ENCODE measurements at regions of chr5 and their contacts with region 1.

Region 1: DNA sequence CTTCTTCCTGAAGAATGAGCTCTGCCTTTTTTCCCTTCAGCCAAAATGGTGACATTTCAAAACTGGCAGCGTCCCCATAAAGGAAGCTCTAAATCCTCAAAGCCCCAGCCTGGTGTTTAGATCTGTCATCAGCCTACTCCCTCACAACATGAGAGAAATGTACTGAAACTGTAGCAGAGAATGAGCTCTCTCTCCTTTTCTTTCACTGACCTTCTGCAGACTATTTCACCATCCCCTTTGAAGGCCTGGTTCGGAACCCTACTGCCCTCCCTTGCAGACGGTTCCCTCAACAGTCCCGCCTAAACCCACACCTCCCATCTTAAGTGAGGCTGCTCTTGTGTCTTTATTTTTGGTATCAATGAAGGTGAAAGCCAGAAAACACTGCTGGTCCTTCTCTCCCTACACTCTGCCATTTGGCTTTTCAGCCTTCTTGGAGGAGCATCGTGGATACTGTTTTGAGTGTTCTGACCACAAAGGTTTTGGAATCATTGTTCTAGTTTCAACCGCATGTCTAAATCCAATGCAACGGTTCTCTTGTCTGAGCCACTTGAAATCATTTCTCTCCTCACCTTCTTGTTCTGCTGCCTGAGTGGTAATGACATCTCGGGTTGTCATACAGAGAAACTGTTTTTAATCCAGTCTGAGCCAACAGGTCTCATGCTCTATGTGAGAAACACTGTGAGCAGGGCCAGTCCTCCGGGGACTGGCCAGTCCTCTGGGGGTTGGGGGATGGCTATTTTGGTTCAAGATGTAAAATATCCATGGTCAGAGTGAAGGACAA is 39.0 kb downstream of the ITK start:
- DNase-seq: peak; percentile 62
- ATAC-seq: peak; percentile 63
- H3K4me3 Mint-ChIP-seq: peak overlapping the region; percentile 33
- H3K27ac Mint-ChIP-seq: peak overlapping the region; percentile 93
- H3K4me1 Mint-ChIP-seq: peaks cover 90% of the 10 kb centered on the region
- H3K27me3 Mint-ChIP-seq: no peaks in the 10 kb centered on the region

Region 2: GRCh38 chr5:157026789-157027424 is 192.8 kb before region 1 on chr5:
- CTCF ChIA-PET with region 1: interaction called, 3 read pairs
- POLR2A ChIA-PET with region 1: no interaction called
- intact Hi-C with region 1: loop called in 1 of 2 experiments (anchors 10 kb)
- DNase-seq: peak; percentile 32
- ATAC-seq: no peak
- H3K4me3 Mint-ChIP-seq: no peak overlapping the region
- H3K27ac Mint-ChIP-seq: no peak overlapping the region
- H3K4me1 Mint-ChIP-seq: peaks cover 36% of the 10 kb centered on the region
- H3K27me3 Mint-ChIP-seq: no peaks in the 10 kb centered on the region

Region 3: DNA sequence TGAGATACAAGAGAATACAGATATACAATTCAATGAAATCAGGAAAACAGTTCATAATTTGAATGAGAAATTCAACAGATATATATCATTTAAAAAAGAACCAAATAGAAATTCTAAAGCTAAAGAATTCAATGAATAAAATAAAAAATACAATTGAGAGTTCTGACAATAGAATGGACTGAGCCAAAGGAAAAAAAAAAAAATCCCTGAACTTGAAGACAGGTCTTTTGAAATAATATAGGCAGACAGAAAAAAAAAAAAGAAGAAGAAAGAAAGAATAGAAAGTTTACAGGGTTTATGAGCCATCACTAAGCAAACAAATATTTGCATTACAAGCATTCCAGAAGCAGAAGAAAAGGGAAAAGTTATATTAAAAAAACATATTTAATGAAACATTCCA is 98.0 kb before region 1 on chr5:
- CTCF ChIA-PET with region 1: no interaction called
- POLR2A ChIA-PET with region 1: no interaction called
- intact Hi-C with region 1: no loop called
- DNase-seq: no peak
- ATAC-seq: no peak
- H3K4me3 Mint-ChIP-seq: no peak overlapping the region
- H3K27ac Mint-ChIP-seq: no peak overlapping the region
- H3K4me1 Mint-ChIP-seq: peaks cover 4% of the 10 kb centered on the region
- H3K27me3 Mint-ChIP-seq: no peaks in the 10 kb centered on the region

Region 4: DNA sequence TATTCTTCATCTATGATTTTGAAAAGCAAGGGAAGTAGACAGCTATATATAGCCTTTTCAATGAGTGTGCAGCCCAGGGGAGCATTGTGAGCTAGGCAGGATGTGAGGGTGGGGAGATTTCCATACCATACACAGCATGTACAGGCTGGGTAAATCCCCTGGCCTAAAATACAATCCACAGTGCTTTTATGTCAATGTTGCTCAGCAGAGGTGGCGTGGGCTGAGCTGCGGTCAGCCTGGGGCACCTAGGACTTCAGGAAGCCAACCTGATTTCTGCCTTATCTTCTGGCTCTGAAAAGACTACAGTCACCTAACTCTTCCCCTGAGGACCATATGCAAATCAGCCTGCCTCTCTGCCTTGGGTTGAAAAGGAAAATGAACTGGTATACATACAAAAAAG is 47.3 kb before region 1 on chr5:
- CTCF ChIA-PET with region 1: interaction called, 5 read pairs
- POLR2A ChIA-PET with region 1: interaction called, 10 read pairs
- intact Hi-C with region 1: loop called in 1 of 2 experiments (anchors 1 kb)
- DNase-seq: peak; percentile 96
- ATAC-seq: peak; percentile 93
- H3K4me3 Mint-ChIP-seq: peak overlapping the region; percentile 63
- H3K27ac Mint-ChIP-seq: peak overlapping the region; percentile 94
- H3K4me1 Mint-ChIP-seq: peaks cover 85% of the 10 kb centered on the region
- H3K27me3 Mint-ChIP-seq: no peaks in the 10 kb centered on the region

Region 5: DNA sequence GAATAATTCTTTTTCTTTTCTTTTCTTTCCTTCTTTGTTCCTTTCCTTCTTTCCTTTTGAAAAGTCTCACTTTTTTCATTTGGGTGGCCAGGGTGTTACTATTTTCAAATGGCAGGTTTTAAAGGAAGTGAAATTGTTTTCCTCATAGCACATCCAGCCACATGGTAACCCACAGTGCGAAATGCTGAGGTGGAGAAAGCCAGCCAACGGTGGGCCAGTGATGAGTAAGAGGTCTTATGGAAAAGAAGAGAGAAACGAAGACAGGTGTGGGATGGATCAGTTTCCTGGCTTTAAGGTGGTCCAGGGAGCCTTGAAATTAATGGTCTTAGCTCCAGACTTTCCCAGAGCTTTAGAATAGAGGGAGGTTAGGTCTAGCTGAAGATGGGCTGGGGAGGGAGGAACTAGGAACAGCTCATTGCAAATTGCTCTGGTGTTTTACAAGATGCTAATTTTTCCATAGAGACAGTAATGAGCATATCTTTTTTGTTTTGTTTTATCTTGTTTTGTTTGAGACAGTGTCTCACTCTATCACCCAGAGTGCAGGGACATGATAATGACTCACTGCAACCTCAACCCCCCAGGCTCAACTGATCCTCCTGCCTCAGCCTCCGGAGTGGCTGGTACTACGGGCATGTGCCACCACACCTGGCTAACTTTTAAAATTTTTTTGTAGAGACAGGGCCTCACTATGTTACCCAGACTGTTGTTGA is 21.2 kb before region 1 on chr5:
- CTCF ChIA-PET with region 1: interaction called, 8 read pairs
- POLR2A ChIA-PET with region 1: interaction called, 6 read pairs
- intact Hi-C with region 1: loop called (anchors 1 kb)
- DNase-seq: peak; percentile 75
- ATAC-seq: peak; percentile 78
- H3K4me3 Mint-ChIP-seq: peak overlapping the region; percentile 66
- H3K27ac Mint-ChIP-seq: peak overlapping the region; percentile 98
- H3K4me1 Mint-ChIP-seq: peaks cover 94% of the 10 kb centered on the region
- H3K27me3 Mint-ChIP-seq: no peaks in the 10 kb centered on the region

Region 6: DNA sequence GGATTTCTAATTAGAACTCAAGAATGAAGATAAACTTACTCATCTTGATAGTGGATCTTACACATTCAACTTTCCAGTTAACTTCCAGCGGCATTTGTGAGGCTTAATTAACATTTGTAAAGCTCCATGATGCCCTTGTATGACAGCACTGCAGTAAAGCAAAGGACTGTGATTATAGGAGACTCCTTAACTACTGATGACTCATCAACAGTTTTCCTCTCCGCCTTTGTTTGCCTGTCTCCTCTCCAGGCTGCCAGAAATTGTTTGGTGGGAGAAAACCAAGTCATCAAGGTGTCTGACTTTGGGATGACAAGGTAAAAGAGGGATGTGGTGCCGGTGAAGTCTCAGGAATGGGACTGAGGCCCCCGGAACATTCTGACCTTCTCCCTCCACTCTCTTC is 25.8 kb after region 1 on chr5:
- CTCF ChIA-PET with region 1: interaction called, 4 read pairs
- POLR2A ChIA-PET with region 1: no interaction called
- intact Hi-C with region 1: loop called in 1 of 2 experiments (anchors 1 kb)
- DNase-seq: no peak
- ATAC-seq: no peak
- H3K4me3 Mint-ChIP-seq: peak overlapping the region; percentile 12
- H3K27ac Mint-ChIP-seq: peak overlapping the region; percentile 88
- H3K4me1 Mint-ChIP-seq: peaks cover 89% of the 10 kb centered on the region
- H3K27me3 Mint-ChIP-seq: no peaks in the 10 kb centered on the region

Region 7: DNA sequence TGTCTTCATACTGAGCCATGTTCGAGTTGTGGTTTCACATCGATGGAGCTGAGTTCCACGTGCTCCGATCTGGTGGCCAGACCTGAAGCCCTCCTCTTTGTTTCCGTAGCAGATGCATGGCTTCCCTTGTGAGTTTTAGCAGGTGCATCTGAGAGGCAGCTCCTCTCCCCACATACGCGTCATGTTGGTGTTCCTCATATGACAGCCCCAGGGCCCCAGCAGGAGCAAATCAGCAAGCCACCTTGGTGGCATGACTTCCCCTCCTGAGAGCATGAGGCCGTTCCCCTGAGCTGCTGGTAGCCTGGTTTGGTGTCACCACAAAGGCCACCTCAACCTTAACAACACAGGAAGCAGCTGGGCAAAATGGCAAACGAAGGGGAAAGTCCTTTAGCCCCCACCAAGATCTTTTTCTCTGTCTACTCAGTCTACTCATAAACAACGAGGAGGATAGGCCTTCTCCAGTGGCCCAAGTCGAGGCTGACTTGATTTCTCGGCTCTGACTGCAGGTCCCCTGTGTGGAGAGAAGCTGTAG is 52.1 kb after region 1 on chr5:
- CTCF ChIA-PET with region 1: no interaction called
- POLR2A ChIA-PET with region 1: interaction called, 6 read pairs
- intact Hi-C with region 1: loop called (anchors 2 to 5 kb)
- DNase-seq: peak; percentile 95
- ATAC-seq: peak; percentile 82
- H3K4me3 Mint-ChIP-seq: peak overlapping the region; percentile 96
- H3K27ac Mint-ChIP-seq: peak overlapping the region; percentile 97
- H3K4me1 Mint-ChIP-seq: peaks cover 84% of the 10 kb centered on the region
- H3K27me3 Mint-ChIP-seq: no peaks in the 10 kb centered on the region

Region 8: GRCh38 chr5:157449011-157449723 is 229.5 kb after region 1 on chr5:
- CTCF ChIA-PET with region 1: no interaction called
- POLR2A ChIA-PET with region 1: no interaction called
- intact Hi-C with region 1: no loop called
- DNase-seq: no peak
- ATAC-seq: no peak
- H3K4me3 Mint-ChIP-seq: no peak overlapping the region
- H3K27ac Mint-ChIP-seq: no peak overlapping the region
- H3K4me1 Mint-ChIP-seq: no peaks in the 10 kb centered on the region
- H3K27me3 Mint-ChIP-seq: no peaks in the 10 kb centered on the region